ENCODE measurements at regions of chr1 and their contacts with region 1.

Region 1: DNA sequence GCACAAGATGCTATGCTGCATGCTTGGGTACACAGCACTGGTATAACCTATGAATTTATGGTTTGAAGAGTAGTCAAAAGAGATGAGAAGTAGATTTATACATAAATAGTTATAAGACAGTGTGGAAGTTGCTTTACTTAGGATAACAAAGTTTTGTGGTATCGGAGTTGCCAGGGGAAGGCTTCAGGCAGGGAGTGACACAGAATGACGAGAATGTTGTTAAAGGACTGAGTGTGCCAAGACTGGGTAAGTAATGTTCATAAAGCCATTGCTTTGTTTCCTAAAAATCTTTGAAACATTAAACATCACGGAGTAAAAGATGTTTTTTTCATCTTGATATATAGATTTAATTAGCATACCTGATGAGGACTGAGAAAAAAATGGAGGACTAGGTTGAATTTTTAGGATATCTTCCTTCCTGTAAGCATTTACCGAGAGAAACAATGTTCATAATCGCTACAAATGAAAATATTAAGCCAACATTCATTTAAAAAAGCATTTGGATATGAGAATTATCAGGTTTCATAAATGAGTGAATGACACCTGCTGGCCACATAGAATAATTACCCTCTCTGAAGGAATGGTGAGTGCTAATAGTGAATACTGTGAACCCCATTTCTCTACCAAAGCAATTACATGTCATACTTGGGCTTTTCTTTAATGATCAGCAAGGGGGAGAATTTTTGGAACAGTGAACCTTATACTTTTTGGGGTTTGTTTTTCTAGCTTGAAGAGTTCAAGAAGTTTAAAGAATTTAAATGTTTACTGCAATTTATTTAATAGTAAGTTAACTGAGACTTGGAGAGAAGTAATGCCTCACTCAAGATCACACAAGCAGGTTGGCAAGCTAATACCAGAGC is 28.4 kb downstream of the EXTL2 start:
- DNase-seq: peak in 3 of 14 experiments; percentile 33 to 48 (median 41)
- ATAC-seq: no peak
- H3K4me3 ChIP-seq: no peak overlapping the region
- H3K4me3 Mint-ChIP-seq: no peak overlapping the region
- H3K27ac ChIP-seq: no peak overlapping the region
- H3K27ac Mint-ChIP-seq: no peak overlapping the region
- H3K4me1 ChIP-seq: no peaks in the 10 kb centered on the region
- H3K4me1 Mint-ChIP-seq: no peaks in the 10 kb centered on the region
- H3K27me3 ChIP-seq: no peaks in the 10 kb centered on the region
- H3K27me3 Mint-ChIP-seq: no peaks in the 10 kb centered on the region
- CTCF ChIP-seq: peak; percentile 60

Region 2: DNA sequence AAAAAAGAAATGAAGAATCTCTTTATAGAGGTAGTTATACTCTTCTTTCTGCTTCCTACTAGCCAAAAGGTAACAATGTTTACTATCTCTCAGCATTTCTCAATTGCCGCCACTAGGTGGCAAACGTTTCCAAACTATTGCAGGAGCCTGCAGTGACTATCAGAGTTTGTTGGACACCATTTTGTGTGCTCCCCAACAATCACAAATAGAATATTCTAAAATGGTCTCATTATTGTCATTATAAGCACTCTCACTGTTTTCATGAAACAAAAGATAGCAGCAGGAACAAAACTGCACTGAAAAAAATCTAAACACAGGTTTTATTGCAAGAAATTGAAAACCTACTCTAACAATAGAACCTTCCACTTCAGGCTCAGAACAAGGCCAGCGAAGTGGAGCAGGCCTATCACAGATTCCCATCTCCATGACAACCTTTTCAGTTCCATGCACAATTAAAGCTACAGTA is 1685.9 kb before region 1 on chr1:
- CTCF ChIA-PET with region 1: no interaction called
- POLR2A ChIA-PET with region 1: no interaction called
- intact Hi-C with region 1: loop called (anchors 5 kb)
- DNase-seq: peak; percentile 21 to 77 (median 43)
- ATAC-seq: peak; percentile 80
- H3K4me3 ChIP-seq: no peak overlapping the region
- H3K4me3 Mint-ChIP-seq: no peak overlapping the region
- H3K27ac ChIP-seq: no peak overlapping the region
- H3K27ac Mint-ChIP-seq: no peak overlapping the region
- H3K4me1 ChIP-seq: no peaks in the 10 kb centered on the region
- H3K4me1 Mint-ChIP-seq: no peaks in the 10 kb centered on the region
- H3K27me3 ChIP-seq: no peaks in the 10 kb centered on the region
- H3K27me3 Mint-ChIP-seq: no peaks in the 10 kb centered on the region
- CTCF ChIP-seq: peak; percentile 90

Region 3: GRCh38 chr1:99808391-99809115 is 1057.7 kb before region 1 on chr1:
- CTCF ChIA-PET with region 1: interaction called, 3 read pairs
- POLR2A ChIA-PET with region 1: no interaction called
- intact Hi-C with region 1: loop called (anchors 1 kb)
- DNase-seq: peak in 6 of 14 experiments; percentile 3 to 80 (median 52)
- ATAC-seq: peak; percentile 86
- H3K4me3 ChIP-seq: no peak overlapping the region
- H3K4me3 Mint-ChIP-seq: no peak overlapping the region
- H3K27ac ChIP-seq: no peak overlapping the region
- H3K27ac Mint-ChIP-seq: no peak overlapping the region
- H3K4me1 ChIP-seq: no peaks in the 10 kb centered on the region
- H3K4me1 Mint-ChIP-seq: peaks cover 7% of the 10 kb centered on the region
- H3K27me3 ChIP-seq: peaks cover 5 to 21% of the 10 kb centered on the region in 2 experiments
- H3K27me3 Mint-ChIP-seq: peaks cover 14% of the 10 kb centered on the region
- CTCF ChIP-seq: peak; percentile 86

Region 4: GRCh38 chr1:100469578-100469977 is 396.7 kb before region 1 on chr1:
- CTCF ChIA-PET with region 1: no interaction called
- POLR2A ChIA-PET with region 1: no interaction called
- intact Hi-C with region 1: loop called in 1 of 2 experiments (anchors 5 kb)
- DNase-seq: no peak
- ATAC-seq: no peak
- H3K4me3 ChIP-seq: no peak overlapping the region
- H3K4me3 Mint-ChIP-seq: no peak overlapping the region
- H3K27ac ChIP-seq: no peak overlapping the region
- H3K27ac Mint-ChIP-seq: peak overlapping the region; percentile 8
- H3K4me1 ChIP-seq: no peaks in the 10 kb centered on the region
- H3K4me1 Mint-ChIP-seq: peaks cover 52% of the 10 kb centered on the region
- H3K27me3 ChIP-seq: no peaks in the 10 kb centered on the region
- H3K27me3 Mint-ChIP-seq: no peaks in the 10 kb centered on the region
- CTCF ChIP-seq: no peak

Region 5: GRCh38 chr1:100606438-100606837 is 259.8 kb before region 1 on chr1:
- CTCF ChIA-PET with region 1: no interaction called
- POLR2A ChIA-PET with region 1: no interaction called
- intact Hi-C with region 1: loop called in 1 of 2 experiments (anchors 2 kb)
- DNase-seq: peak in 2 of 14 experiments; percentile 9 to 21
- ATAC-seq: no peak
- H3K4me3 ChIP-seq: no peak overlapping the region
- H3K4me3 Mint-ChIP-seq: no peak overlapping the region
- H3K27ac ChIP-seq: no peak overlapping the region
- H3K27ac Mint-ChIP-seq: no peak overlapping the region
- H3K4me1 ChIP-seq: no peaks in the 10 kb centered on the region
- H3K4me1 Mint-ChIP-seq: no peaks in the 10 kb centered on the region
- H3K27me3 ChIP-seq: no peaks in the 10 kb centered on the region
- H3K27me3 Mint-ChIP-seq: peaks cover 9% of the 10 kb centered on the region
- CTCF ChIP-seq: no peak

Region 6: DNA sequence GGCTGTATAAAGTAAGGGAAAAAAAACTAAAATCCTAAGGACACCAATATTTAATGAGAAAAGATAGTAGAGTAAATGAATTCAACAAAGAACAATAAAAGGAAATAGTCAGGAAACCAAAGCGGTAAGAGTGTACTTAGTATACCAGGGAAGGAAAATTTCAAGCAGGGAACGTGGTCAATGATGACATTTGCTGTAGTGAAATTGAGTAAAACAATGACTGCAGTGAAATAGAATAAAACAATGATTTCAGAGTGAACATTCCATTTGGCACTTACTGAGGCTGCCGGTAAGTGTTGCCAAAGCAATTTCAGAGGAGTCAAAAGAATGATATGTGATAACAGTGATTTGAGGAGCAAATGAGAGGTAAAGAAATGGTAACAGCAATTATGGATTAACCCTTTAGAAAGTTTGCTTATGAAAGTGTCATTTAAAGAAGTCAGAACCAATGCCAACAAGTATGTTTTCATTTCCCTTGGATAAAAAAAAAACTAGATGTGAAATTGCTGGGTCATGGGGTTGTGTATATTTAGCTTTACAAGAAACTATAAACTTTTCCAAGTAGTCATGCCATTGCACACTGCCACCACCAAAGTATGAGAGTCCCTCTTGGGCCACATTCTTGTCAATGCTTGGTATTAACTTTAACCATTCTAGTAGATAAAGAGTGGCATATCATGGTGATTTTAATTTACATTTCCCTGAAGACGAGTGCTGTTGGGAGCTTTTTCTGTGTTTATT is 96.2 kb before region 1 on chr1:
- CTCF ChIA-PET with region 1: no interaction called
- POLR2A ChIA-PET with region 1: no interaction called
- intact Hi-C with region 1: no loop called
- DNase-seq: no peak
- ATAC-seq: no peak
- H3K4me3 ChIP-seq: no peak overlapping the region
- H3K4me3 Mint-ChIP-seq: no peak overlapping the region
- H3K27ac ChIP-seq: no peak overlapping the region
- H3K27ac Mint-ChIP-seq: no peak overlapping the region
- H3K4me1 ChIP-seq: no peaks in the 10 kb centered on the region
- H3K4me1 Mint-ChIP-seq: no peaks in the 10 kb centered on the region
- H3K27me3 ChIP-seq: no peaks in the 10 kb centered on the region
- H3K27me3 Mint-ChIP-seq: peaks cover 4% of the 10 kb centered on the region
- CTCF ChIP-seq: no peak

Measured in CD4-positive, alpha-beta T cell (primary cell).